BJ (cell line): ENCODE measurements at regions of chr5 and their contacts with region 1.

Region 1: DNA sequence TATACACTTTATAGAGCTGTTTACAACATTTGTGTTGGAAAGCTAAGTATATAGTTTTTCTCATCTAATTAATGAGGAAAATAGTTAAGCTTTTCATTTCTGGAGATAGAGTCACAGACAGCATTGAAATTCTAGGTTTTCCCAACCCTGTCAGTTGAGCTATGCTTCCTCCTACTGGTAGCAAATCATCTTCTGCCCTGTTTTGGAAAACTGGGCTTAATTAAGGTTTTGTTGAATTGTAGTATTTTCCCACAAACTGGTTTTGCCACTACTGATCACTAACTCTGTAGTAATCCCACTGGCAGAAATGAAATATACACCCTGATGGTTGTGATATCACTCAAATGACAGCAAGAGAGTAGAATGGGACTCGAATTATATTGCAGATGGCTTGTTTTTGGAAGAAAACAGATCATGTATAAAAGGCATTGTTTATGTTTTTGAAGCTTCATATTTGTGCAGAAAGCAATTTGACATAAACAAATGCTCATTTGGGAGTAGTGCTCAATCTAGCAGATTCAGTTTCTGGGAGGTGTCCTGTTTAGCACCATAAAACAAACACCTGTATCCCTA is 46.6 kb downstream of the CD180 start:
- DNase-seq: no peak
- H3K4me3 ChIP-seq: no peak overlapping the region
- H3K27me3 ChIP-seq: no peaks in the 10 kb centered on the region
- CTCF ChIP-seq: peak; percentile 68

Region 2: DNA sequence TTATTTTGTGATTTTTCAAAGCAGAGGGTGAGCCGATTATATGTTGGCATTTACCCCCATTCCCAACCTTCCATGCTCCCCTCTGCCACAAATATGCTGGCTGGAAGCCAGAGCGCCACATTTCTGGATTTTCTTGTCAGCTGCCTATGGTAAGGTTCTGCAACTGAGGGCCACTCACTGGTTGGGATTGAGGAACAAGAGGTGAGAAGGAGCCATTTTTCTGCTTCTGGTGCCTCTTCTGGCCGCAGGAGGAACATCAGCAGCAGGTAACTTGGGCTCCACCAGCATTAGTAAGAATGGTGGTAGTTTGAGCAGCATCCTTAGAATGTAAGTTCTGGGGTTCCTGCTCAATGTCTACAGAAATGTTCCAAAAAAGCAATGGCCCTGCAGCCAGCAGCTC is 713.3 kb before region 1 on chr5:
- CTCF ChIA-PET with region 1: no interaction called
- POLR2A ChIA-PET with region 1: no interaction called
- DNase-seq: no peak
- H3K4me3 ChIP-seq: no peak overlapping the region
- H3K27me3 ChIP-seq: no peaks in the 10 kb centered on the region
- CTCF ChIP-seq: peak; percentile 20; the same call in 1 of the 2 replicates

Region 3: GRCh38 chr5:66982470-66982869 is 167.6 kb before region 1 on chr5:
- CTCF ChIA-PET with region 1: interaction called, 24 read pairs
- POLR2A ChIA-PET with region 1: no interaction called
- DNase-seq: no peak
- H3K4me3 ChIP-seq: no peak overlapping the region
- H3K27me3 ChIP-seq: no peaks in the 10 kb centered on the region
- CTCF ChIP-seq: no peak

Region 4: GRCh38 chr5:67431191-67431590 is 281.2 kb after region 1 on chr5:
- CTCF ChIA-PET with region 1: no interaction called
- POLR2A ChIA-PET with region 1: no interaction called
- DNase-seq: no peak
- H3K4me3 ChIP-seq: no peak overlapping the region
- H3K27me3 ChIP-seq: no peaks in the 10 kb centered on the region
- CTCF ChIP-seq: no peak

Region 5: GRCh38 chr5:69013481-69013880 is 1863.4 kb after region 1 on chr5:
- CTCF ChIA-PET with region 1: no interaction called
- POLR2A ChIA-PET with region 1: no interaction called
- DNase-seq: no peak
- H3K4me3 ChIP-seq: no peak overlapping the region
- H3K27me3 ChIP-seq: peaks cover 2% of the 10 kb centered on the region; the same call in 1 of the 2 replicates
- CTCF ChIP-seq: no peak